ENCODE measurements at regions of chr22 and their contacts with region 1.

Region 1: DNA sequence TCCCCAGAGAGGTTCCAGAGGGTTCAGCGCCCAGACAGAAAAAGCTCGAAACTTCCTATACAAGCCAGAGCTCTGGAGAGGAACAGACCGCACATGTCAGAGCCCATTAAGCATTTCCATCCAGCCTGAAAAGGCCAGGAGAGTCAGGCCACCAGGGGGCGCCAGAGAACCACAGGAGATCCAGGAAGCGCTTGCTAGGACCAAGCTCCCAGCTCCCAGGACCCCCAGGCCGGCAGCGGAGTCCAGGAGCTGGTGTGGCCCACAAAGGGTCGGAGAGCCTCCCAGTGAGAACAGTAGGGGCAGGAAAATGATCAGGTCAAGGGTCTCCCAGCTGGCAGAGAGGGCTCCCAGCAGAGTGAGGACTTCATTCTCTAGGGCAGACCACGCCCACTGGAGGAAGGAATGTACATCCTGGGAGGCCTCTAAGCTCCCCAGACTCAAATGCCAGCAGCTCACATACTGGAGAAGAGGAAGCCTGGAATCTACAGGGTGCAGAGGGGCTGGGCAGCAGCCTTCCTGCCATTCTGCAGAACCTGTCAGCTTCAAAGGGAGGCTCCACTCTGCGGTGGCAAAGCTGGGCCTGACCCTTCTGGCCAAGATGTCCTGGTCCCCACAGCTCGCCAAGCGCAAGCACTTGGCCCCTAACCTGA is 2.1 kb upstream of the MEI1 start:
- DNase-seq: peak; percentile 96
- ATAC-seq: peak; percentile 79
- H3K4me3 Mint-ChIP-seq: no peak overlapping the region
- H3K27ac Mint-ChIP-seq: peak overlapping the region; percentile 77
- H3K4me1 Mint-ChIP-seq: peaks cover 11% of the 10 kb centered on the region
- H3K27me3 Mint-ChIP-seq: no peaks in the 10 kb centered on the region

Region 2: GRCh38 chr22:41713004-41713403 is 15.8 kb after region 1 on chr22:
- CTCF ChIA-PET with region 1: interaction called, 31 read pairs
- POLR2A ChIA-PET with region 1: no interaction called
- intact Hi-C with region 1: no loop called
- DNase-seq: no peak
- ATAC-seq: no peak
- H3K4me3 Mint-ChIP-seq: no peak overlapping the region
- H3K27ac Mint-ChIP-seq: no peak overlapping the region
- H3K4me1 Mint-ChIP-seq: no peaks in the 10 kb centered on the region
- H3K27me3 Mint-ChIP-seq: no peaks in the 10 kb centered on the region

Region 3: GRCh38 chr22:41780746-41781505 is 83.7 kb after region 1 on chr22:
- CTCF ChIA-PET with region 1: interaction called, 26 read pairs
- POLR2A ChIA-PET with region 1: no interaction called
- intact Hi-C with region 1: loop called (anchors 1 to 5 kb)
- DNase-seq: peak; percentile 95
- ATAC-seq: peak; percentile 94
- H3K4me3 Mint-ChIP-seq: peak overlapping the region; percentile 81
- H3K27ac Mint-ChIP-seq: peak overlapping the region; percentile 98
- H3K4me1 Mint-ChIP-seq: peaks cover 39% of the 10 kb centered on the region
- H3K27me3 Mint-ChIP-seq: no peaks in the 10 kb centered on the region

Region 4: GRCh38 chr22:41822317-41823060 is 125.2 kb after region 1 on chr22:
- CTCF ChIA-PET with region 1: interaction called, 7 read pairs
- POLR2A ChIA-PET with region 1: no interaction called
- intact Hi-C with region 1: loop called in 1 of 2 experiments (anchors 2 kb)
- DNase-seq: peak; percentile 57
- ATAC-seq: peak; percentile 97
- H3K4me3 Mint-ChIP-seq: no peak overlapping the region
- H3K27ac Mint-ChIP-seq: peak overlapping the region; percentile 87
- H3K4me1 Mint-ChIP-seq: peaks cover 36% of the 10 kb centered on the region
- H3K27me3 Mint-ChIP-seq: no peaks in the 10 kb centered on the region

Region 5: GRCh38 chr22:41932353-41932752 is 235.1 kb after region 1 on chr22:
- CTCF ChIA-PET with region 1: no interaction called
- POLR2A ChIA-PET with region 1: no interaction called
- intact Hi-C with region 1: no loop called
- DNase-seq: no peak
- ATAC-seq: no peak
- H3K4me3 Mint-ChIP-seq: no peak overlapping the region
- H3K27ac Mint-ChIP-seq: no peak overlapping the region
- H3K4me1 Mint-ChIP-seq: peaks cover 10% of the 10 kb centered on the region
- H3K27me3 Mint-ChIP-seq: no peaks in the 10 kb centered on the region

Region 6: GRCh38 chr22:41946629-41947423 is 249.6 kb after region 1 on chr22 and contains the start of gene CENPM:
- CTCF ChIA-PET with region 1: interaction called, 31 read pairs
- POLR2A ChIA-PET with region 1: interaction called, 8 read pairs
- intact Hi-C with region 1: no loop called
- DNase-seq: peak; percentile 98
- ATAC-seq: peak; percentile 95
- H3K4me3 Mint-ChIP-seq: peak within 1 kb of the TSS; percentile 97
- H3K27ac Mint-ChIP-seq: peak within 1 kb of the TSS; percentile 92
- H3K4me1 Mint-ChIP-seq: peaks cover 59% of the 10 kb centered on the region
- H3K27me3 Mint-ChIP-seq: no peaks in the 10 kb centered on the region
- total RNA-seq, gene CENPM: 65.2 to 82.1 TPM

Measured in activated CD4-positive, alpha-beta T cell treated with anti-CD3 and anti-CD28 coated beads for 36 hours (primary cell).